Activated B cell treated with CpG ODN at 0.5 μM for 24 hours (primary cell): ENCODE measurements at regions of chr1 and their contacts with region 1.

Region 1: GRCh38 chr1:31831397-31832378 is 15.9 kb upstream of the SPOCD1 start:
- DNase-seq: no peak
- ATAC-seq: no peak
- H3K4me3 Mint-ChIP-seq: no peak overlapping the region
- H3K27ac Mint-ChIP-seq: no peak overlapping the region
- H3K4me1 Mint-ChIP-seq: peaks cover 18% of the 10 kb centered on the region
- H3K27me3 Mint-ChIP-seq: no peaks in the 10 kb centered on the region
- CTCF ChIP-seq: no peak

Region 2: DNA sequence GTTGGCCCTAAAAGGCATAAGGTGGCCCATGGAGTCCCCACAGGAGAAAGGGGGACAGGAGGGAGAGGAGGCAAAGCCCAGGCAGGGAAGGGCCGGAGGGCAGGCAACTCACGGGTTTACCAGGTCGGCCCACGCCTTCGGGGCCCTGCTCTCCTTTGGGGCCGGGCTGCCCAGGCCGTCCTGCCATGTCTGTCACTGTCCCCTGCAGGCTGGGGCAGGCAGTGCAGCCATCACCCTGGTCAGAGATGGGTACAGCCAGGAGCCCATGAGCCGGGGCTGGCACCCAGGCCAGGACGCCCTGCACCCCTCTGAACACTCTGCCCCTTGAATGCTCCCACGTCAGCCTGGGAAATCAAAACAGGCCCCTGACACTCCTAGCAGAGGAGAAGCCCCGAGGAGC is 147.7 kb before region 1 on chr1:
- CTCF ChIA-PET with region 1: no interaction called
- POLR2A ChIA-PET with region 1: no interaction called
- intact Hi-C with region 1: no loop called
- DNase-seq: no peak
- ATAC-seq: peak; percentile 45
- H3K4me3 Mint-ChIP-seq: no peak overlapping the region
- H3K27ac Mint-ChIP-seq: no peak overlapping the region
- H3K4me1 Mint-ChIP-seq: no peaks in the 10 kb centered on the region
- H3K27me3 Mint-ChIP-seq: peaks cover 39% of the 10 kb centered on the region
- CTCF ChIP-seq: no peak

Region 3: GRCh38 chr1:31866450-31867032 is 34.9 kb after region 1 on chr1:
- CTCF ChIA-PET with region 1: no interaction called
- POLR2A ChIA-PET with region 1: interaction called, 3 read pairs
- intact Hi-C with region 1: loop called (anchors 2 kb)
- DNase-seq: no peak
- ATAC-seq: peak; percentile 62
- H3K4me3 Mint-ChIP-seq: no peak overlapping the region
- H3K27ac Mint-ChIP-seq: peak overlapping the region; percentile 46
- H3K4me1 Mint-ChIP-seq: peaks cover 9% of the 10 kb centered on the region
- H3K27me3 Mint-ChIP-seq: no peaks in the 10 kb centered on the region
- CTCF ChIP-seq: no peak